ENCODE measurements at regions of chr2 and their contacts with region 1.

Region 1: DNA sequence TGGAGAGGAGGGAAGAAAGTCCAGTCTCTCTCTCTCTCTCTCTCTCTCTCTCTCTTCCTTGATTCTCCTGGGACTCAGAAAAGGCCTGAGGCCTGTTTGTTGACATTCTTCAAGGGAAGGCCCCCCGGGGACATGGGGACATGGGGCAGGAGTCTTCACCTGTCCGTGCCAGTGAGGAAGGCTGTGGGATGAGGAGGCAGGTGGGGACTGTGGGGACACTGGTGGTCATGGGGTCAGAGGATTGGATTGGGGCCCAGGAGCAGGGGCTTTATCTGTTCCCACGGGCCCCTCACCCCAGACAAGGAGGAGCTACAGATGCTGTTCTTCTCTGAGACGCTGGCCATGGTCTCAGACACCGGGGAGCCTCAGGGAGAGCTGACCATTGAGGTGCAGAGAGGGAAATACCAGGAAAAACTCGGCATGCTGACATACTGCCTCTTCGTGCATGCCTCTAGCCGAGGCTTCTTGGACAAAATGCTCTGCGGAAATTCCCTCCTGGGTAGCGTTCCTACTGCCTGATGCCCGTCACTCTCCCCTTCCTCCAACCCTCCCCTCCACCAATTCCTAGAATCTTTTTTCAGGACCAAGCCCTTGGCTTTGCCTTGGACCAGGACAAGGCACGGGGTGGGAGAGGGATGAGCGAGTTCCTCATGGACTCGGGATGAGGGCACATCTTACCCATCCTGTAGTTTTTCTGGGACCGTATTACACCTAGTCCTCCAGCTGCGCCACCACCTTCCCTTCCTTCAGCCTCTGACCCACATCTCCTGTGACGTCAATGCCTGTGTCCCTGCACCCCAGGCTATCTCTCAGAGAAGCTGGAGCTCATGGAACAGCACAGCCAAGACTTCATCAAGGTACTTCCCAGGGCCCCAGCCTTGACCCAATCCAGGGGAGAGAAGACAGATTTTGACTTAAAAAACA is 841 bp downstream of the CATIP start:
- DNase-seq: peak; percentile 55
- H3K4me3 ChIP-seq: no peak overlapping the region
- H3K27ac ChIP-seq: peak overlapping the region in 2 of 8 donors; percentile 15 to 49
- H3K4me1 ChIP-seq: peaks cover 0 to 45% (median 6%) of the 10 kb centered on the region in 6 donors
- H3K27me3 ChIP-seq: no peaks in the 10 kb centered on the region
- CTCF ChIP-seq: no peak
- POLR2A ChIP-seq: no peak

Region 2: GRCh38 chr2:218301176-218301819 is 56.2 kb before region 1 on chr2:
- intact Hi-C with region 1: loop called (anchors 5 kb)
- DNase-seq: peak; percentile 91
- H3K4me3 ChIP-seq: no peak overlapping the region
- H3K27ac ChIP-seq: peak overlapping the region in 2 of 8 donors; percentile 26 to 30
- H3K4me1 ChIP-seq: peaks cover 0 to 10% (median 7%) of the 10 kb centered on the region in 6 donors
- H3K27me3 ChIP-seq: no peaks in the 10 kb centered on the region
- CTCF ChIP-seq: peak; percentile 87 to 97 (median 96)
- POLR2A ChIP-seq: no peak